Left ventricle myocardium inferior (tissue), 1 donor: ENCODE measurements at regions of chr7 and their contacts with region 1.

Region 1: GRCh38 chr7:131945313-131945911 is 389.0 kb upstream of the PODXL start:
- DNase-seq: peak; percentile 30
- H3K4me3 ChIP-seq: peak overlapping the region; percentile 52
- H3K27ac ChIP-seq: no peak overlapping the region
- H3K4me1 ChIP-seq: peaks cover 17% of the 10 kb centered on the region
- H3K27me3 ChIP-seq: peaks cover 82% of the 10 kb centered on the region
- CTCF ChIP-seq: peak; percentile 91

Region 2: GRCh38 chr7:131586253-131586652 is 359.2 kb before region 1 on chr7:
- intact Hi-C with region 1: no loop called
- DNase-seq: peak; percentile 38
- H3K4me3 ChIP-seq: no peak overlapping the region
- H3K27ac ChIP-seq: peak overlapping the region; percentile 64
- H3K4me1 ChIP-seq: peaks cover 31% of the 10 kb centered on the region
- H3K27me3 ChIP-seq: no peaks in the 10 kb centered on the region
- CTCF ChIP-seq: no peak

Region 3: GRCh38 chr7:131859147-131859821 is 86.1 kb before region 1 on chr7:
- intact Hi-C with region 1: no loop called
- DNase-seq: peak; percentile 46
- H3K4me3 ChIP-seq: no peak overlapping the region
- H3K27ac ChIP-seq: no peak overlapping the region
- H3K4me1 ChIP-seq: no peaks in the 10 kb centered on the region
- H3K27me3 ChIP-seq: peaks cover 26% of the 10 kb centered on the region
- CTCF ChIP-seq: peak; percentile 89

Region 4: GRCh38 chr7:132250883-132251653 is 305.7 kb after region 1 on chr7:
- intact Hi-C with region 1: loop called (anchors 10 kb)
- DNase-seq: peak; percentile 80
- H3K4me3 ChIP-seq: no peak overlapping the region
- H3K27ac ChIP-seq: no peak overlapping the region
- H3K4me1 ChIP-seq: peaks cover 41% of the 10 kb centered on the region
- H3K27me3 ChIP-seq: no peaks in the 10 kb centered on the region
- CTCF ChIP-seq: no peak

Region 5: DNA sequence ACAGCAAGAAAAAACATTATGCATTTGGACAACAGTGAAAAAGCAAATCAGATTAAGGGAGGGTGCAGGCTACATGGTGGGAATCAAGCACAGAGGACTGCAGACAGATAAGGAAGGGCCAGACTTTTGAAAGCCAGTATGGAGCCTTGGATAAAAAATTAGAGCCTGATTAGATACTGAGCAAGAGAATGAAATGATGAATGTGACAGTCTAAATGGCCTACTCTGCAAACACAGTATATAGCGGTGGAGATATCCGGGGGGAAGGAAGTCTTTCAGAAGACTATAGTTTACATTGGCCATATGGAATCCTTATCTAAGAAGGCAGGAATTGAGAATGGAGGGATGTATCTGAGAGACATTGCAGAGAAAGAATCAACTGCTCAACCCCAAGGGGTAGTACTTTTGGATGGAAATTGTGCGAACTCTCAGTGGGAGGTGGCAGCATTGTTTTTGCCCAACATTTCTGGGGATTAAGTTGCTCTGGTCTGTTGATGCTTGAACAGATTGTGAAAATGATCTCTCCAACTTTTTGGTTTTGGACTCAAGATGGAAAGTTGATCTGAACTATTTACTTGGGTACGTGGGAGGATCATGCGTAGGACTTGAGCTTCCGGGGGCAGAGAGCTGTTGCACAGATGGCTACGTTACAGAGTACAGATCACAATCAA is 1175.9 kb after region 1 on chr7:
- intact Hi-C with region 1: no loop called
- DNase-seq: no peak
- H3K4me3 ChIP-seq: no peak overlapping the region
- H3K27ac ChIP-seq: no peak overlapping the region
- H3K4me1 ChIP-seq: no peaks in the 10 kb centered on the region
- H3K27me3 ChIP-seq: peaks cover 60% of the 10 kb centered on the region
- CTCF ChIP-seq: no peak